Activated CD4-positive, alpha-beta memory T cell treated with anti-CD3 and anti-CD28 coated beads for 36 hours (primary cell): ENCODE measurements at regions of chr2 and their contacts with region 1.

Region 1: GRCh38 chr2:191189112-191189635 is 38.4 kb upstream of the STAT4 start:
- DNase-seq: no peak
- H3K4me3 Mint-ChIP-seq: peak overlapping the region; percentile 27
- H3K27ac Mint-ChIP-seq: peak overlapping the region; percentile 10
- H3K4me1 Mint-ChIP-seq: peaks cover 58% of the 10 kb centered on the region
- H3K27me3 Mint-ChIP-seq: no peaks in the 10 kb centered on the region

Region 2: GRCh38 chr2:191114403-191114886 is 74.7 kb before region 1 on chr2:
- CTCF ChIA-PET with region 1: no interaction called
- POLR2A ChIA-PET with region 1: interaction called, 7 read pairs
- intact Hi-C with region 1: loop called (anchors 1 kb)
- DNase-seq: peak; percentile 57
- H3K4me3 Mint-ChIP-seq: peak overlapping the region; percentile 66
- H3K27ac Mint-ChIP-seq: peak overlapping the region; percentile 88
- H3K4me1 Mint-ChIP-seq: peaks cover 70% of the 10 kb centered on the region
- H3K27me3 Mint-ChIP-seq: no peaks in the 10 kb centered on the region

Region 3: DNA sequence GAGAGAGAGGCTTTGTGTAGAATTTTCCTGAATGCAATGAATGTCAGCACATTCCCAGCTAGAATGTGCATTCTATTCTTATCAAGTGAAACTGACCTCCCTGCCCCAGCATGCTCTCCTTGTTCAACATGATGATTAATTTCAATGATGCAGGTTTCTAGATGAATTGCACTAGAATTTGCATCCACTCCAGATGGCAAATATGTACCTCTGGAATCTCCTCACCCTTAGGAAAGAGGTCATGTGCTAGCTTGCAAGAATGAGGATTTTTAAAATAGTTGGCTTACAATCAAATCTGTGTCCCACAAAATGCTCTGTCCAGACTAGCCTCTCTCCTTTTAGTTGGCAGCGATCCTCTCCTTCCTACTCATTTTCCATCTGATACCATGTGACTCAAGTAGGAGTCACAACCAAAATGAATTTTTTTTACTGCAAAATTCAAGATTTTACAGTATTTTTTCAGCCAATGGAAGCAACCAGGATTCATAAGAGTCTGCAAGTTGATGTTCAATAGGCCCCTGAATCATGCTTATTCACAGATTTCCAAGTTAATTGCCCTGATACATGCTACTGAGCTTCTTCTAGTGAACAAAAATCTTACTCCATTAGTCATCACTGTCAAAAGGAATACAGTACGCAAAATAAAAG is 17.3 kb before region 1 on chr2:
- CTCF ChIA-PET with region 1: interaction called, 3 read pairs
- POLR2A ChIA-PET with region 1: interaction called, 10 read pairs
- intact Hi-C with region 1: loop called (anchors 1 kb)
- DNase-seq: no peak
- H3K4me3 Mint-ChIP-seq: no peak overlapping the region
- H3K27ac Mint-ChIP-seq: peak overlapping the region; percentile 16
- H3K4me1 Mint-ChIP-seq: peaks cover 58% of the 10 kb centered on the region
- H3K27me3 Mint-ChIP-seq: no peaks in the 10 kb centered on the region

Region 4: DNA sequence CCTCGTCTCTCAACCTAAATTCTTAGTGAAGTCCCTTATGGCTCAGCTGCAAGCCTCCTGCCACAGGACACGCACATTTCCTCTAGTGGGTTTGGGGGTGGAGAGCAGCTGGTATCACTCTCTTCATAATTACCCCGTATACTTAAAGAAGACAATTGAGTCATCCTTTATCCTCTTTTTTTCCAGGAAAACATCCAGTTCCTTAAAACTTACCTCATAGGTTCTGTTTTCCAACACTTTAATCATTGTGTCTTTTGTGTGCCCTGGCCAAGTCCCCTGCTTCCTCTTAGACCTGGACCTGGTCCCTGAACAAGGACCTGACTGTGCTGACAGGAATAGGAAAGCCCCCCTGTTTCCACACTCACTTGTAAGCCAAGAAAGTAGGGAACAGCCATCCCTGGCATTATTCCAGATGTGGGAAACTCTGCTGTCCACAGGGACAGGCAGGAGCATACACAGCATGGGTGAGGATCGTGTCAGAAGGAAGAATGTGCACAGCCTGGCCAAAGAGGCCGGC is 13.8 kb after region 1 on chr2:
- CTCF ChIA-PET with region 1: interaction called, 5 read pairs
- POLR2A ChIA-PET with region 1: interaction called, 16 read pairs
- intact Hi-C with region 1: loop called (anchors 1 kb)
- DNase-seq: peak; percentile 42
- H3K4me3 Mint-ChIP-seq: no peak overlapping the region
- H3K27ac Mint-ChIP-seq: peak overlapping the region; percentile 70
- H3K4me1 Mint-ChIP-seq: peaks cover 46% of the 10 kb centered on the region
- H3K27me3 Mint-ChIP-seq: no peaks in the 10 kb centered on the region

Region 5: DNA sequence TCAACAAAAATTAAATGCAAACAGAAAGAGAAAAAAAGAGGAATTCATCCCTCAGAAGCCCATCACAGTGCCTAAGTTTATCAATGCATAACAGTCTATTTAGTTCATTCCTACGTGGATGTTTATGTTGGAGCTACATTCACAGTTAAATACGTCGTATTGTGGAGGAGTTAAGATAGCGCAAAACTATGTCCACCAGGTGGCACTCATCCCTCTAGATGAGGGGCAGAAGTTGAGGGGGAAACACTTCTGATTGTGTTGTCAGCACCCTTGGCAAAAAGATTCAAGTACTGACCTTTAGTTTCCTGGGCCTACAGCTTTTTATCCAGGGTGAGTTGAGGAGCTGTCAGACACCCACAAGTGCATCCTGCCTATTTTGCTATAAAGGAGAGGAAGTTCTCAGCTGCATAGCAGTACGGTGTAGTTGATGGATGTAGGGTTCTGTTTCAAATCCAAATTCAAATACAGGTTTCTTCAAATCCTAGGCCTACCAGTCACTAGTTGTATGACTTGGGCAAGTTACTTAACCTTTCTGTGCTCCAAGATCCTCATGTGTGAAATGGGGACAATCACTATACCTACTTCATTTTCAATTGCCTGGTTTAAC is 29.2 kb after region 1 on chr2:
- CTCF ChIA-PET with region 1: interaction called, 26 read pairs
- POLR2A ChIA-PET with region 1: interaction called, 4 read pairs
- intact Hi-C with region 1: loop called (anchors 1 kb)
- DNase-seq: peak; percentile 47
- H3K4me3 Mint-ChIP-seq: no peak overlapping the region
- H3K27ac Mint-ChIP-seq: no peak overlapping the region
- H3K4me1 Mint-ChIP-seq: peaks cover 22% of the 10 kb centered on the region
- H3K27me3 Mint-ChIP-seq: no peaks in the 10 kb centered on the region

Region 6: DNA sequence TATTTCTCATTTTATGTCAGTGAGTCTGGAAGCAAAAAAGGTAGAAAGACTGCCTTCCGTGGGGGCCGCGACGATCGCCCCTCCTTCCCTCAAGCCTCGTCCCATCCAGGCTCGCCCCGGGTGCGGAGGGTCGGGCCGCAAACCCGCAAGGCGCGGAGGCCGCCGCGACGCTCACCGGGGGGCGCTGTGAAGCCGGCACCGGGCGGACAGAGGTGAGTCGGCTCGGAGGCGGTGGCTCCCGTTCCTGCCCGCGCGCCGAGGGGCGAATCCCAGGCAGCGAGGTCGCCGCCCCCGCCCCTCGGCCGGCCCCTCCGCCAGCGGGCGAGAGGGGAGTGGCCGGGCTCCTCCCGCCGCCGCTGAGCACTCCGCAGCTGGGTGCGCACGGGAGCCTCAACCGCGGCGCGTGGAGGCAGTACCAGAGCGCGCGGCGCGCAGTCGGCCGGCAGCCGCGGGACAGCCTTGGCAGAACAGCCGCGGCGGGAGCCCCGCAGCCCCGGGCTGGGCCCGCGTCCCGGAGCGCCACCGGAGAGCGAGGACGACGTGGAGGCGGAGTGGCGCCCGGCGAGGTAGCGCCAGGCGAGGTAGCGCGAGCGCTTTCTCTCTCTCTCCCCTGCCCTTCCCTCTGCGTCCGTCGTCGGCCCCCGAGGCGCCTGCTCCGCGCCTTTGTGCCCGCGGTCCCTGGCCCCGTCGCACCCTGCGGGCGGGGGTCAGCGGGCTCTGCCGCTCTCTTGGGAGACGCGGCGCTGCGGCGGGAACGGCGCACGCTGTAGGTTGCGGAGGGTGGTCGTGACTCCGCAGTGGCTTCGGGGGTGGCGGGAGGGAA is 56.1 kb after region 1 on chr2 and contains the start of gene MYO1B:
- CTCF ChIA-PET with region 1: no interaction called
- POLR2A ChIA-PET with region 1: interaction called, 4 read pairs
- intact Hi-C with region 1: loop called (anchors 1 kb)
- DNase-seq: peak; percentile 74
- H3K4me3 Mint-ChIP-seq: peak within 1 kb of the TSS; percentile 74
- H3K27ac Mint-ChIP-seq: no peak within 1 kb of the TSS
- H3K4me1 Mint-ChIP-seq: peaks cover 12% of the 10 kb centered on the region
- H3K27me3 Mint-ChIP-seq: peaks cover 15% of the 10 kb centered on the region
- total RNA-seq, gene MYO1B: 13.5 to 15.6 TPM

Region 7: GRCh38 chr2:191740016-191740419 is 550.8 kb after region 1 on chr2:
- CTCF ChIA-PET with region 1: no interaction called
- POLR2A ChIA-PET with region 1: no interaction called
- intact Hi-C with region 1: loop called (anchors 10 kb)
- DNase-seq: peak; percentile 54
- H3K4me3 Mint-ChIP-seq: no peak overlapping the region
- H3K27ac Mint-ChIP-seq: peak overlapping the region; percentile 50
- H3K4me1 Mint-ChIP-seq: peaks cover 15% of the 10 kb centered on the region
- H3K27me3 Mint-ChIP-seq: peaks cover 2% of the 10 kb centered on the region